ENCODE measurements at regions of chr11 and their contacts with region 1.

Region 1: DNA sequence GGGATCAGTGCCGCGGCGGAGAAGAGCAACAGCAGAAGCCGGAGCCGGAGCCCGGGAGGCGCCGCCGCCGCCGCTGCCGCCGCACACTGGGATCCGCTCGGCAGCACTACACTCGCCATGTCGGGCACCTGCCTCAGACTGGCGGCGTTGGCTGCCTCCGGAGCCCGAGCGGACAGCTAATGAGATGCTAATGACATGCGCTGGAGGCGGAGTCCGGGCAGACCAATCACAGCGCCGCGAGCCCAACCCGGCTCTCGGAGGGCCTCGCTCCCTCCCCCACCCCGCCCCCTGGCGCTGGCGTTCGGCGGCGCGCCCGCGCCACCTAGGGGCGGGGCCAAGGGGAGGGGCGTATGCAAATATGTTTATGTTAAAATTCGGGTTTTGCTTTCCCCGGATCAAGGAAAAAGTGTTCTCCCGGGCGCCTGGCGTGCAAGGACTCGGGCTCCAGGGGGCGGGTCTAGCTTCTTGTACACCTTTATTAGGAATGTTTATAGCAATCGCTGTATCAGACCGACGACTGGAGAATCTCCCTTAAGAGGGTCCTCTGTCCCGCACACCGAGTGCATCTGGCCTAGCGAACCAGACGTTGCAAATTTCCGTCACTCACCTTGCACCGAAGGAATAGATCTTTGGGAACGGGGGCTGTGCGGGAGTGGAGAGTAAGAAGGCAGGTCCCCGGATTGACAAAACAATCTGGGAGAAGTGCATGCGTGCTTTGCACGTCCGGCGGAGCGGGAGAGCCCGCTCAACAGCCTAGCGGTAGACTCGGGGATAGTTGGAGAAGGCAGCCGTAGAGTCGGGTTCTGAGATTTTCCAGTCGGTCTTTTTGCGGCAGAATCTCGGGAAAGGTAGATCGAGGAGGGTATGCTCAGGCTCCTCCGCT is at the start of gene CADM1:
- DNase-seq: peak; percentile 94
- ATAC-seq: peak; percentile 95
- total RNA-seq, gene CADM1: 58.7 TPM

Region 2: DNA sequence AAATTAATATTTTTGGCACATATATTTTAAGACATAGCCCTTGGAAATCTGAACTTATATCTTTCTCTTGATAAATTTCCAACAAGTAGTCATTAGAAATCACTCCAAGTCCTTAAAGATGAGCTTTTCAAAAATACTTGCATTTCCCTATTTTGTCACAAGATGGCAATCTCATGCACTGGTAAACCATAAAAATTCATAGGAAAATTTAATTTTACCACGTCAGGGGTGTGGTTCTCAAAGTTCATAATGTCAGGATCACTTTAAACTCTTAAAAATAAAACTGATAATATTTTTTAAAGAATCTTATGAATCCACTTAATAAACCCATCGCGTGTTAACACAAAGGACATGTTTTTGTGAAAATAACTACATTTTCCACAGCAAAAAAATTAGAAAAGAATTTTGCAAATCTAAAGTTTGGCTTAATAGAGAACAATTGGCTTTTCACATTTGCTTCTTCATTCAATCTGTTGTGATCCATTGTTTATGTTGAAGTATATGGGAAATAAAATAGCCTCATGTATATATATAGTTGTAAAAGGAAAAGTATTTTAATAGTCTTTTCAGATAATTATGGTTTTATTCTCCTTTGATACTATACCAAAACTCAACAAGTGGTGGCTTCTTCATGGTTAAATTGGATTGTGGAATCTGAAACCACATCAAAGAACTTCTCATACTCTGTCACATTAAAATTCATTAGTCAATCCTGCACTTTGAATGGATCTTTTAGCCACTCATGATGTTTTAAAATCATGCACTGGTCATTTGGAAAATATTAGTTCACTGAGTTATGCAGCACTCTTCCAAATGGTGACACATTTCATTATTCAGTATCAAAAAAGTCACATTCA is 169.4 kb before region 1 on chr11:
- intact Hi-C with region 1: loop called (anchors 10 kb)
- DNase-seq: no peak
- ATAC-seq: no peak

Region 3: DNA sequence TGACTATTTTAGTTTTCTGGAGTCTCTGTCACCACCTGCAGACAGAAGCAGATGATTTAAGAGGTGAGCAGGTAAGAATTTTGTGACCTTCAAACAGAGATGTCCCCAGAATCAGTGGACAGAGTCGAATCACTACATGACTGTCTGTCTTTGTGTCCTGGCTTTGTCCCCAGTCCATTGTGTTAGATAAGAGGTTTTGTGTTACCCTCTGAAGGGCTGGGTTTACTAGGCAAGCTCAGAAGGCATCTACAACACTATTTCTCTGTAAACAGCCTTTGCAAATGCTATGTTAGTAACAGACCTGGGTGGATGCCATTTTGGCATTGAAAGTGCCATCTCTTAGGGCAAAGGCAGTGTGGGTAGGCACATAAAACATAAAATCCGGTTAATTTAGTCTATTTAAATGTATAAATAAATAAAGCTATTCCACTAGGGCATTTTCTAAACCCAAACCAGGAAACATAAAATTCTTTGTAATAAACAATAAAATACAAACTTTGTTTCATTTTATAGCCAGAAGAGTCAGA is 40.0 kb after region 1 on chr11:
- intact Hi-C with region 1: no loop called
- DNase-seq: no peak
- ATAC-seq: no peak

Region 4: DNA sequence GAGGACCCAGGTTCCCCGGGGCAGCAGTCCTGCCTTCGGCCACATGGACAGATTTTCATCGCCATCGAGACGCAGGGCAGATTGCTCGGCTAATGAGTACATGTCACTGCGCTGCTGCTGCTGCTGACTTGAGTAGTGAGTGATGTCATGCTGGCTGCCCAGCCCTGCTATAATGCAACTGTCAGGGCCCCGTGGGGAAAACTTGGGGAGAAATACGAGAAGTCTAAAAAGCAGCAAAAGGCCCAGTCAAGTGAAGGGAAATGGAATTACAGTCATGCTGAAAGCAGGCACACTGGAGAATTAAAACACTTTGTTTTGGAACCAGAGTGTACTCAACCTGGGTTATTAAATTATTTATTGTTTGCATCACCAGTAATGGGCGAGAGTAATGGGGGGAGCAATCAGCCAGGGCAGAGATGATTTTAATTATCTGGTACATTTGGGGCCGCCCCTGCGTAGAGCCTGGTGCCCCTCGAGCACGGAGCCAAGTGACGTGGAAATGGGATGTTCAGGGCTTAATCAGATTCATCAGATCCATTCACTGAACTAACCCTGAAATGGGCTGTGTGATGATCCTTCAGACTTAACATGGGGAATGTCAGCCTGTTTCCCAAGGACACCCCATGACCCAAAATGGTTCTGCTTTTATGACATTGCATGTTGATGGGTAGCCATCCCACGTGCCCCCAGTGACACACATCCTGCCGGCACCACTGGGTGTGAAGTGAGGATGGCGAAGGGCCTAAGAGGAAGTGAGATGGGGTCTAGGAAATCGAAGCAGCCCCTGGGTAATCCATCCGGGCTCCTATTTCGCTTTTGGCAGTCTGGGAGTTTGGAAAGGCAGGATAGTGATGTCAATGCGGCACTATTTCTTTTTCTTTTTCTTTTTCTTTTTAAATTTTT is 241.3 kb after region 1 on chr11:
- intact Hi-C with region 1: no loop called
- DNase-seq: no peak
- ATAC-seq: peak; percentile 20

Region 5: GRCh38 chr11:116229236-116229970 is 724.9 kb after region 1 on chr11:
- intact Hi-C with region 1: loop called (anchors 5 kb)
- DNase-seq: no peak
- ATAC-seq: no peak

Measured in sciatic nerve (tissue), 2 donors.